Calu3 (cell line): ENCODE measurements at regions of chr6 and their contacts with region 1.

Region 1: GRCh38 chr6:39203852-39204375 is 25.4 kb downstream of the KCNK5 start:
- DNase-seq: peak; percentile 99
- H3K4me3 Mint-ChIP-seq: peak overlapping the region; percentile 62
- H3K27ac Mint-ChIP-seq: peak overlapping the region; percentile 97
- H3K4me1 Mint-ChIP-seq: peaks cover 93% of the 10 kb centered on the region
- H3K27me3 Mint-ChIP-seq: no peaks in the 10 kb centered on the region
- CTCF ChIP-seq: no peak

Region 2: DNA sequence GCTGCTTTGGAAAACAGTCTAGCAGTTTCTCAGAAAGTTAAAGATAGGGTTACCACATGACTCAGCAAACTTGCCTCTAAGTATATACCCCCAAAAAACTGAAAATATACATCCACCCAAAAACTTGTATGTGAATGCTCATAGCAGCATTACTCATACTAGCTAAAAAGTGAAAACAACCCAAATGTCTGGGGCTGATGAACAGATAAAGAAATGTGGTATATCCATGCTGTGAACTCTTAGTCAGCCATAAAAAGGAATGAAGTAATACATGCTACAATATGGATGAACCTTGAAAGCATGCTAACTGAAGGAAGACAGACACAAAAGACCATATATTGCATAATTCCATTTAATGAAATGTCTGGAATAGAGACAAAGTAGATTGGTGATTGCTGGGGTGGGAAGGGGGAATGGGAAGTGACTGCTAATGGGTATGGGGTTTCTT is 235.2 kb before region 1 on chr6:
- CTCF ChIA-PET with region 1: no interaction called
- intact Hi-C with region 1: no loop called
- DNase-seq: no peak
- H3K4me3 Mint-ChIP-seq: no peak overlapping the region
- H3K27ac Mint-ChIP-seq: no peak overlapping the region
- H3K4me1 Mint-ChIP-seq: no peaks in the 10 kb centered on the region
- H3K27me3 Mint-ChIP-seq: peaks cover 63% of the 10 kb centered on the region
- CTCF ChIP-seq: no peak

Region 3: DNA sequence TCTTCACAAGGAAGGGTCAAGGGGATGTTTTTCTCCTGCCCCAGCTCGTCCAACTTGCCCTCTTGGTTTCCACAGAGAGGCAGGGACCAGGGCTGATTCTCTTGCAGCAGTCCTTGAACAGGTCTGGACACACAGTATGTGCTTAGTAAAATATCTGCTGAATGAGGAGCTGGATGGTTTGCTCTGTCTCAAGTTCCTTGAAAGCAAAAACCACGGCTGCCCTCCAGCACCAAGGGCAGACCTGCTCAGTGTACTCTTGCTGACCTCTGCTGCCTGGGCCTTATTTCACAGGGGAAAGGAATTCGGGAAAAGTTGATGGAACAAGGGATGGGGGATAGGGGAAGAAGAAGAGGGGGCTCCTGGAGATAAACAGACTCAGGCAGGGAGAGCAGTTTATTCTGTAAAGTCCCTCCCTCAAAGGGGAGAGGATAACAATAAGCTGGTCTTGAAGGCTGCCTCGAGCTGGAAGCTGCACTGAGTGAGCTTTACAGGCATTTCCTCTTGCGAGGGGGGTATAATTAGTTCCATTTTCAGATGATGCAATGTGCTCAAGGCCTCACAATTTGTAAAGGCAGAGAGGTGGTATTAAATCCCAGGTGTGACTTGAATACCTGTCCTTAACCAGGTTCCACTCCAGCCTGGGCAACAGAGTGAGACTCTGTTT is 15.1 kb after region 1 on chr6:
- CTCF ChIA-PET with region 1: interaction called, 22 read pairs
- intact Hi-C with region 1: no loop called
- DNase-seq: no peak
- H3K4me3 Mint-ChIP-seq: peak overlapping the region; percentile 5
- H3K27ac Mint-ChIP-seq: peak overlapping the region; percentile 53
- H3K4me1 Mint-ChIP-seq: peaks cover 97% of the 10 kb centered on the region
- H3K27me3 Mint-ChIP-seq: no peaks in the 10 kb centered on the region
- CTCF ChIP-seq: no peak